ENCODE measurements at regions of chr19 and their contacts with region 1.

Region 1: DNA sequence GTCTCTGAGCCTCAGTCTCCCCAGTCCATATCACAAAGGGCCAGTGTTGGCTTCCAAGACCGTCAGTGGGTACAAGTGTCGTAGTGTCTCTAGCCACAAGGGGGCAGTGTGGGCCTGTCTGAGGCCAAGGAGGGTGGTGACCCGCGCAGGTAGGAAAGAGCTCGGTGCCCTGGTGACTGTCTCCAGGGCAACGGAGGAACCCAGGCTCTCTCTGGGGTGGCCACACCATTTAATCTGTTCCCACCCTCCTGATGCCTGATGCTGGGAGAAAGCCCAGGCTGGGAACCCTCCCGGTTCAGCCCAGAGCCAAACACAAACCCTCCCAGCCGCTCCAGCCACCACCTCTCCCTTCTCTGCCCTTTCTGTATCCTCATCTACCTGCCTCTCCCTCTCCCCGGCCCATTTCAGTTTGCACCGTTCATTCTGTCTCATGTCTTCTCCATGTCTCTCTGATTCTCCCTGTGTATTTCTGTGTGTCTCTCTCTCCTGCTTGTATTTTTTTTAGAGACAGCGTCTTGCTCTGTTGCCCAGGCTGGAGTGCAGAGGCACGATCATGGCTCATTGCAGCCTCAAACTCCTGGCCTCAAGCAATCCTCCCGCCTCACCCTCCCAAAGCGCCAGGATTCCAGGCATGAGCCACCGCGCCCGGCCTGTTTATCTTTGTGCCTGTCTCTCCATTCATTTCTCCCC is 17.5 kb upstream of the MEIS3 start:
- DNase-seq: peak; percentile 73

Region 2: GRCh38 chr19:47697863-47698609 is 261.2 kb after region 1 on chr19:
- in situ Hi-C with region 1: loop called (anchors 10 kb)
- DNase-seq: peak; percentile 91

Region 3: GRCh38 chr19:47891923-47892666 is 455.2 kb after region 1 on chr19:
- in situ Hi-C with region 1: no loop called
- DNase-seq: peak; percentile 11